WTC11 (cell line): ENCODE measurements at regions of chr13 and their contacts with region 1.

Region 1: DNA sequence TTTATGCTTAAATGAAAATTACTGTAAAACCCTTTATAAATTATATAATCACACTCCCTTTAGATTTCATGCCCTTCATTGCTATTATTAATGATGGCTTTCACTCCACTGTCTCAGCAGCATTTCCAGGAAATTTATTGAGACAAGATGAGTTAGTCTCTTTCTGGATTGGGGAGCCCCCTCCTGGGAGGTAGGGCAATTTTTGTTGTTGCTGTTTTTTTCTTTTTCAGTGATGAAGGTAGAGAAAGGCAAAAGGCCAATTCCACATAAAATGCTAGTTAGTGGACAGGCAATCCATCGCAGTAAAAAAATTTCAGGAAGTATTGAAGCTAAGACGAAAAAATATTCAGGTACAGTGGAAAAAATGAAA is 80.2 kb downstream of the TEX26 start:
- DNase-seq: no peak
- ATAC-seq: peak; percentile 29; the same call in 1 of the 2 replicates
- H3K4me3 Mint-ChIP-seq: no peak overlapping the region
- H3K27ac Mint-ChIP-seq: peak overlapping the region; percentile 14; the same call in 1 of the 2 replicates
- H3K4me1 Mint-ChIP-seq: peaks cover 33% of the 10 kb centered on the region
- H3K27me3 Mint-ChIP-seq: no peaks in the 10 kb centered on the region; the same call in 1 of the 2 replicates
- CTCF ChIP-seq: no peak

Region 2: DNA sequence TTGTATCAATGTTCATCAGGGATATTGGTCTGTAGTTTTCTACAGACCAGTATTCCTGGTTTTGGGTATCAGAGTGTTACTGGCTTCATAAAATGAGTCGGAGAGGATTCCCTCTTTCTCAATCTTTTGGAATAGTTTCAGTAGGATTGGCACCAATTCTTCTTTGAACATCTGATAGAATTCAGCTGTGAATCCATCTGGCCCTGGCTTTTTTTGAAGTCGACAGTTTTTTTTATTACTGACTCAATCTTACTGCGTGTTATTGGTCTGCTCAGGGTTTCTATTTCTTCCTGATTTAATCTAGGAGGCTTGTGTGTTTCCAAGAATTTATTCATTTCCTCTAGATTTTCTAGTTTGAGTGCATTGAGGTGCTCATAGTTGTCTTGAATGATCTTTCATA is 68.8 kb before region 1 on chr13:
- CTCF ChIA-PET with region 1: no interaction called
- POLR2A ChIA-PET with region 1: no interaction called
- DNase-seq: no peak
- ATAC-seq: no peak
- H3K4me3 Mint-ChIP-seq: no peak overlapping the region
- H3K27ac Mint-ChIP-seq: no peak overlapping the region
- H3K4me1 Mint-ChIP-seq: no peaks in the 10 kb centered on the region
- H3K27me3 Mint-ChIP-seq: no peaks in the 10 kb centered on the region
- CTCF ChIP-seq: no peak

Region 3: DNA sequence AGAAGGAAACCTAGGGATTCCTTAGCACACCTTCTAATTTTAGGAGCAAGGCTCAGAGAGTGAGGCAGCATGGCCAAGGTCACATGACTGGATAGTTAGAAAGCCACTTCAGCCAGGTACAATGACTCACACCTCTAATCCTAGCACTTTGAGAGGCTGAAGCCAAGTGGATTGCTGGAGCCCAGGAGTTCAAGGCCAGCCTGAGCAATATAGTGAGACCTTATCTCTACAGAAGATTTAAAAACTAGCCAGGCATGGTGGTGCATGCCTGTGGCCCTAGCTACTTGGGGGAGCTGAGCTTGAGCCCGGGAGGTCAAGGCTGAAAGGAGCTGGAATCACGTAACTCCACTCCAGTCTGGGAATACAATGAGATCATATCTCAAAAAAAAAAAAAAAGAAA is 11.0 kb before region 1 on chr13:
- CTCF ChIA-PET with region 1: interaction called, 10 read pairs
- POLR2A ChIA-PET with region 1: interaction called, 3 read pairs
- DNase-seq: no peak
- ATAC-seq: no peak
- H3K4me3 Mint-ChIP-seq: no peak overlapping the region
- H3K27ac Mint-ChIP-seq: no peak overlapping the region
- H3K4me1 Mint-ChIP-seq: no peaks in the 10 kb centered on the region
- H3K27me3 Mint-ChIP-seq: 0 out of 2 replicates have a peak, but pooled peaks cover 3% of the 10 kb centered on the region
- CTCF ChIP-seq: no peak